ENCODE measurements at regions of chr10 and their contacts with region 1.

Region 1: DNA sequence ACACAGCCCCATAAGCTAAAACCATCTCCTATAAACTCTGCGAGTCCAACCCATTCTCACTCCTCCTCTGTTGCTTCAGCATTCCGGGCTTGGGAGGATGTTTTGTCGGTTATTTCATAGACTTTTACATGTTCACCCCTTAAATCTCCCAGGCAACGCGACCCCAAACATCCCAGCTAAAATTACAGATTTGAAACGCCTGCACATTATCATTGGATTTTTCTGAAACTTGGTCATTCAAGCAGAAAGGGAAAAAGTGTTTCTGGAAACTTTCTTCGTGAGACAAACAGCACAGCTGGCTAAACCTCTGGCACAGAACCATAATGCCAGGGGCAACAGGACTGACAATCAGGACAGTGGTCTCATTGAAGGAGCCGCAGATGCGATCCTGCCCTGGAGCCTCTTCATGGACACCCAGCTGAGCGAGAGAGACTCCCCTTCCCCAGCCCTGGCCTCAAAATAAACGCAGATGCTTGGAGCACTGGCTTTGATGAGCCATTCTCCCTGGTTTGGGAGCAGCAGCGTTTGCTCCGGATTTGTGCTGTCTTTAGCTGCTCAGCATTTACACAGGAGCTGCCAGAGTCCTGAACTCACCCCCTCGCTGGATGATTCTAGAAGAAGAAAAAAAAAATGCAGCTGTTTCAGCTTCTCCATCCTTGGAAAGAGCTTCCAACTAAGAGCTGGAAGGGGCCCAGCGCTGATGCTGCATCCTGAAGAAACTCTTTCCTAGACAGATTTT is 30.1 kb downstream of the AFAP1L2 start:
- DNase-seq: no peak
- H3K4me3 ChIP-seq: peak overlapping the region in 1 of 3 donors; percentile 2
- H3K27ac ChIP-seq: peak overlapping the region; percentile 70 to 82
- H3K4me1 ChIP-seq: peaks cover 0 to 22% of the 10 kb centered on the region in 2 donors
- H3K27me3 ChIP-seq: no peaks in the 10 kb centered on the region
- CTCF ChIP-seq: no peak
- POLR2A ChIP-seq: no peak

Region 2: DNA sequence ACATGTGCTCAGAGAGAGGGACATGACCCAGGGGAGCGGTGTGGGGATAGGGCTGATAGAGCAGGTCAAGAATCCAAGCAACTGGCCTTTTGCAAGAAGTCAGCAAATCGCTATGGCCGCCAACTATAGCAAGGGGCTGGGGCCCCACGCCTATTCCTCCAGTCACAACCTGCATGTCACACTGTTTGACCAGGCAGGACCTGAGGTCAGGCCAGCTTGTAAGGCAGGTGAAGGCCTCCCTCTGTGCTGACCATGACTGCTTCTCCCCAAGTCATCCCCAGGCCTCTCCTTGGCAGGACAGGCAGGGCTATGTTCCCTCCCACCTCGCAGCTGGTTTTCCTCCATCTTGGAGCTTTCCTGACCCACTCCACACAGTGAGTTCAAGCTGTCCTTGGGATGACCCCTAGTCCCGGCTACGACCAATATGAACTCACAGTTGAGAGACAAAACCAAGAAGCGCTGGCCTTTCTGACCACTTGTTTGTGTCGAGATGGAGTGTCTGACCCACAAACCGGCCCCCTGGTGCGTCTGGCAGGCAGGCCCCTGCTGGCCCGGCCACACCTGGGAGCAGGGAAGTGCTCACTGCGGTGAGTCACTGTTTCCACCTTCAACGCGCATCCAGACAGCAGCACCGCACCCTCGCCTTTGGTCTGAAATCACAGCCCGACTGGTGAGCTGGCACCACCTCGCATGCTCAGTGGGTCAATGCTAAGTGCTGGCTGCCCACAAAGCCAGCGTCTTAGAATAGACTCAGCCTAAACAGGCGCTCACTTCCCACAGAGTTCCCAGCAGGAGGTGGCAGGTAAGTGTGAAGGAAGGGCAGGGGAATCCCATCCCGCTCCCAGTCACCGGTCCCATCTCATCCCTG is 53.7 kb before region 1 on chr10:
- intact Hi-C with region 1: loop called (anchors 5 kb)
- DNase-seq: no peak
- H3K4me3 ChIP-seq: no peak overlapping the region
- H3K27ac ChIP-seq: no peak overlapping the region
- H3K4me1 ChIP-seq: no peaks in the 10 kb centered on the region
- H3K27me3 ChIP-seq: no peaks in the 10 kb centered on the region
- CTCF ChIP-seq: no peak
- POLR2A ChIP-seq: no peak

Region 3: DNA sequence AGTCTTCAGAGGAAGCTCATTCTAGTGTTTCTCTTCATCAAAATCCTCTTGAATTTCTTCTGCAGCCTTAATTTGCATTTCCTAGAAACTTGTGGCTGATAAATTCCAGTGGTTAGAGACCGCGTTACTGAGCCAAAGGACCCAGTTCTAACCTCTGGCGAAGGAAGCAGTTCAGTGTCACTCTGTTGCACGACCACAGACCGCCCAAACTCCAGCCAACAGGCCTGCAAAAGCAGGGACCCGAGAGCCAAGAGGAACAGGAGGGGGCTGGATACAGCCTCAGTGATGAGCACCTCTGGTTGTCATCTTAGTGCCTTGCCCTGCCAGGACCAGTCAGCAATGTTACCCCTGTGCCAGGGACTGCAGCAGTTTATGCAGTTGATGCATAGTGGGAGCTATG is 39.9 kb before region 1 on chr10:
- intact Hi-C with region 1: no loop called
- DNase-seq: no peak
- H3K4me3 ChIP-seq: no peak overlapping the region
- H3K27ac ChIP-seq: no peak overlapping the region
- H3K4me1 ChIP-seq: peaks cover 3 to 8% of the 10 kb centered on the region in 2 donors
- H3K27me3 ChIP-seq: no peaks in the 10 kb centered on the region
- CTCF ChIP-seq: no peak
- POLR2A ChIP-seq: no peak

Measured in breast epithelium (tissue), 4 donors.